Activated T-helper 1 cell treated with anti-CD3 and anti-CD28 coated beads, Interleukin-12 subunit alpha, Interleukin-12 subunit beta, Interleukin-2, Interleukin-4 antibody, amounts not matched to agents 30 ng/mL and 10 ng/mL and 1 ng/mL, durations not matched to agents 14 hours and 24 hours and 36 hours (primary cell): ENCODE measurements at regions of chr6 and their contacts with region 1.

Region 1: DNA sequence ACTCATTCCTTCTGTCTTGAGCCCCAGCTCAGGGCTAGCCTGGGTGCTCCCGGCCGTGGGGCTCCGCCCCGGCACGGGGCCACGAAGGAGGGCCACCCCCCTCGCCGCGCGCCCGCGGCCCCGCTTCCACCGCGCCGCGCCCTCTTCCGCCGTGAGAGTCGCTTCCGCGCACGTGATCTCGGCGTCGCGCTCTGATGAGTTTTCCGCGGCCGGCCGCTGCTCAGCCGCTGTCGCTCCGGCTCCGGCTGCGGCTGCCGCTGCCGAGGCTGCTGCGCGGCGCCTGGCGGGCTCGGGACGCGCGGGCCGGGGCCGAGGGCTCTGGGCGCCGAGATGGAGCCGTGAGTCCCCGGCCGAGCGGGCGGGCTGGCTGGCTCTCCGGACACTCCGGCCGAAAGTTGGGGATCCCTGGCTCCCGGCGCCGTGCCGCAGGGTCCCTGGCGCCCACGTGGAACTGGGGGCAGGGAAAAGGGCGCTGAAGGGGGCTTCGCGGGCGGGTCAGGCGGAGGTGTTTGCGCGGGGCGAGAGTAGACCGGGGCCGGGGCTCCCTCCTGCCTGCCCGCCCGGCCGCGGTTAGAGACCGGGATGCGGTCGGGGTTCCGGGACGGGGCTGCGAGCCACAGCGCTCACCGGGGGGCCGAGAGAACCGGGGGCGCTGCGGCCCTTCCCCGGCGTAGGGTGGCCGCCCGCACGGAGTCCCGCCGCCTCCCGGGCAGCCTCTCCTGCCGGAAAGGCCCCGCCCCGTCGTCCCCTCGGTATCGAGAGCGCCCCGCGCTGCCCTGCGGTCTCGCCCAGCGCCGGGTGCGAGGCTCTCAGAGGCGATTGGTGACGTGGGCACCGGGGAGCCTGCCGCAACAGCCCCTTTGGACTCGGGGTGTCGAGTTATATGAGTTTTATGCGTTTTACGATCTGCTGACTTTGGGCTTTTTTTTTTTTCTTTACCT is at the start of gene TMEM181:
- DNase-seq: peak; percentile 84
- H3K4me3 Mint-ChIP-seq: peak within 1 kb of the TSS; percentile 97
- H3K27ac Mint-ChIP-seq: peak within 1 kb of the TSS; percentile 95
- H3K4me1 Mint-ChIP-seq: peaks cover 32% of the 10 kb centered on the region
- H3K27me3 Mint-ChIP-seq: peaks cover 3% of the 10 kb centered on the region
- total RNA-seq, gene TMEM181: 17.0 and 17.7 TPM in 2 replicates

Region 2: GRCh38 chr6:158270389-158271127 is 289.6 kb before region 1 on chr6:
- intact Hi-C with region 1: loop called (anchors 2 kb)
- DNase-seq: no peak
- H3K4me3 Mint-ChIP-seq: peak overlapping the region; percentile 20
- H3K27ac Mint-ChIP-seq: no peak overlapping the region
- H3K4me1 Mint-ChIP-seq: peaks cover 33% of the 10 kb centered on the region
- H3K27me3 Mint-ChIP-seq: no peaks in the 10 kb centered on the region

Region 3: GRCh38 chr6:158518191-158519127 is 41.7 kb before region 1 on chr6:
- intact Hi-C with region 1: loop called (anchors 1 kb)
- DNase-seq: peak; percentile 60
- H3K4me3 Mint-ChIP-seq: peak overlapping the region; percentile 86
- H3K27ac Mint-ChIP-seq: peak overlapping the region; percentile 87
- H3K4me1 Mint-ChIP-seq: peaks cover 34% of the 10 kb centered on the region
- H3K27me3 Mint-ChIP-seq: peaks cover 20% of the 10 kb centered on the region

Region 4: DNA sequence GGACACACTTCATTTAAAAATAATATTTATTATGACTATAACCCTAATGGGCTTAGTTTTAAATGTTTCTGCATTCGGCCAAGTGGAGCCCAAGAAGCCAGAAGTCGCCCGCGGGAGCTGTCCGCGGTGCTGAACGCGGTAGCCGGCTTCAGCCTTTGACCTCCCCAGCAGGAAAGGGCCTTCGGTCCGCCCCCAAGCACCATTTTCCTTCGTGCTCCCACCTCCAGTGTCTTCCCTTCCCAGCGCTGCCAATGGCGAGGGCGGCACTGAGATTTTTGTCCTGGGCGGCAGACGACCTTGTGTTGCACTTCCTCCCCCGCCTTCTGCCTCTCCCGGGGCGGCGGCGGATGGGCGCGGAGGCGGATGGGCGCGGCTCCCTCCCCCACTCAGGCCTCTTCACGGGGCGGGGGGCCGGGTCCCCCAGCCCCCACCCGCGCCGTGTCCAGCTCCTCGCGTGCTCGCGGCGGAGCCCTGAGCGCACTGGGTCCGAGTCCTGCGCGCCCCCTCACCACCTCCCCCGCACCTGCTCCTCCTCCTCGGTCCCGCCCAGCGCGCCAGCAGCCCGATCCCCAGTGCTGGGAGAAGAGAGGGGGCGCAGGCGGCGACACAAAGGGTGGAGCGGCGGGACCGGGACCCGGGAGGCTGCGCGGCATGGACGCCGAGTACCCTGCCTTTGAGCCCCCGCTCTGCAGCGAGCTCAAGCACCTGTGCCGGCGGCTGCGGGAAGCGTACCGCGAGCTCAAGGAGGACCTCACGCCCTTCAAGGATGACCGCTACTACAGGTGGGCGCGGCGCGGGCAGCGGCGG is 23.9 kb before region 1 on chr6:
- intact Hi-C with region 1: loop called (anchors 2 kb)
- DNase-seq: peak; percentile 62
- H3K4me3 Mint-ChIP-seq: peak overlapping the region; percentile 78
- H3K27ac Mint-ChIP-seq: no peak overlapping the region
- H3K4me1 Mint-ChIP-seq: no peaks in the 10 kb centered on the region
- H3K27me3 Mint-ChIP-seq: peaks cover 44% of the 10 kb centered on the region